Left colon (tissue), 2 donors: ENCODE measurements at regions of chr12 and their contacts with region 1.

Region 1: GRCh38 chr12:105705765-105706164 is 375.3 kb downstream of the C12orf75 start:
- DNase-seq: peak in 1 of 2 donors; percentile 26
- ATAC-seq: peak; percentile 55

Region 2: DNA sequence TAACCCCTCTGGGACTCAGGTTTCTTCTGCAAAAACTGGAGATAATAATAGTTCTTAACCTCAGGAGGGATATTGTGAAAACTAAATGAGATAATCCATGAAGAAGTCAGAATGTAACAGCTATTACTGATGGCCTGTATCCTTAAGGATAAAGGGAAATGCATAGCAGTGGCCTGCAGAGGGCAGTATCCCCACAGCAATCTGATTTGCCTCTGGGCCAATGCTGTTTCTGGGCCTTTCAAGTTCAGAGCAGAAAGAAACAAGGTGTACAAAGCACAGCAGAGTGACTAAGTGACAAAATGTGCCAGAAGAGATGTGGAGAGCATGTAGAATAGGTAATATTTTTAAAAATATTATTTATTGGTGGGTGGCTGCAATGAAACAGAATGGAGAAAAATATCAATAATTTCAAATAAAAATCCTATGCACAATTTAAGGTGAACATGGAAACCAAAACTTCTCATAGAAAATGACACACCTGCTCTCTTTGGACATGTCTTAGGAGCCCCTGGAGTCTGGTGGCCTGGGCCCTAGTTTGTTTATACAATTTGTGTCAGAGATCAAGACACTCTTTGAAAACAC is 285.0 kb before region 1 on chr12:
- intact Hi-C with region 1: loop called in 1 of 2 experiments (anchors 10 kb)
- DNase-seq: peak; percentile 45 to 67
- ATAC-seq: peak; percentile 91